Panc1 (cell line): ENCODE measurements at regions of chr1 and their contacts with region 1.

Region 1: GRCh38 chr1:36223993-36224536 is at the start of gene THRAP3:
- DNase-seq: peak; percentile 96
- ATAC-seq: peak; percentile 98
- H3K4me3 ChIP-seq: peak within 1 kb of the TSS; percentile 82 to 97
- H3K27ac ChIP-seq: peak within 1 kb of the TSS; percentile 96
- H3K4me1 ChIP-seq: peaks cover 11% of the 10 kb centered on the region
- H3K27me3 ChIP-seq: no peaks in the 10 kb centered on the region
- CTCF ChIP-seq: no peak
- total RNA-seq, gene THRAP3: 114 TPM

Region 2: DNA sequence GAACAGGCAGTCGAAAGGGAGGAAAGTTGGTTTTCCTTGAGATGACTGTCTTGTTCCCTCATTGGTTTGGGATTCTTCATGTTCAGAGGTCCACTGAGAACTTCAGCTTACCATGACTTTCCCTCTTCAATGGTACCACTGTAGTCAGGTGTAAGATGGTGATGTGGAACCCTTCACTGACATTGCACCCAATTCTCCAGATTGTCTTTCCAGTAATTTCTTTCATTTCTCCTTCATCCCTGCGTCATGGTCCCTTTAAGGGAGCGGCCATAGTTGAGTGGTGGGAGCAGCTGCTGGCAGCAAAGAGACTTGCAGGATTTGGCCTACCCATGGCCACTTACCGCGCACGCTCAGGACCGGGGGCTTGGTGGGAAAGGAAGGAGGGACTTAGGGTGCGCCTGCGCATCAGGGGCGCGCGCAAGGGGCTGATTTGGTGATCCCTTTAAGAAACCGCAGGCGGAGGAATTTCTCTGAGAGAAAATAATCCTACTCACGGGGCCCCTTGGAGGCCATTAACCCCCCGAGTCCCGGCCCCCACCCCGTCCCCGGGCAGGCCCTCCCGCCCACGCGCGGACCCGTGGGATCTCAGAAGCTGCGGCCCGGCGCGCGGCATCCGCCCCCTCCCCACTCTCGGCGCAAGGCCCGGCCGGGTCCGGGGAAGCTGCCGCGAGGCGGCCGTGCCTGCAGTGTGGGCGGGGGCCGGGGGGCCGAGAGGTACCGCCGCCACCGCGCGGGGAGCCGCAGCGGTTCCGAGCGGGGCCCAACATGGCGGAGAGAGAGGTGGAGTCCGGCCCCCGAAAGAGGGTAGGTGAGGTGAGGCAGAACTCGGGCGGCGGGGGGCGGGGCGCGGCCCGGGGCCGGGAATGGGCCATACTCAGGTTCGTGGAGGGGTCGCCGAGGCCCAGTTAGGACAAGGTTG is 955.5 kb before region 1 on chr1 and contains the start of gene ZMYM4:
- CTCF ChIA-PET with region 1: no interaction called
- POLR2A ChIA-PET with region 1: interaction called, 10 read pairs
- in situ Hi-C with region 1: no loop called
- intact Hi-C with region 1: no loop called
- DNase-seq: peak; percentile 73
- ATAC-seq: peak; percentile 96
- H3K4me3 ChIP-seq: peak within 1 kb of the TSS; percentile 85 to 93
- H3K27ac ChIP-seq: peak within 1 kb of the TSS; percentile 92
- H3K4me1 ChIP-seq: peaks cover 19% of the 10 kb centered on the region
- H3K27me3 ChIP-seq: no peaks in the 10 kb centered on the region
- CTCF ChIP-seq: no peak
- total RNA-seq, gene ZMYM4: 82.2 TPM

Region 3: DNA sequence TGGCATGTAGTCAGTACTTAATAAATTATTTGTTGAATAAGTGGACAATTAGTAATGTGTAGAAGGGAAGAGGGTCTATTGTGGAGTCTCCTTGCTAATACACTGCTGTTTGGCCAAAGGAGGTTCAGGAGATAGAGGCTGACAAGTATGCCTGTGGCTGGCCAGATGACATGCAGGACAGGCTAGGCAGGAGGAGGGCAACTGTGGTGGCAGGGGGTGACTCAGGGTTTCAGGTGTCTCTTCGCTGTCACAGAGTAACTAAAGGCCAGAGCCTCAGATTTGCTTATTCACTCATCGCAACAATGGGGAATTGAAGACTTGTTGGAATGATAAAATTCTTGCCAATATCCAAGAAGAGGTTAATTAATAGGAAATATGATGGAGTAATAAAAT is 33.3 kb after region 1 on chr1:
- CTCF ChIA-PET with region 1: no interaction called
- POLR2A ChIA-PET with region 1: interaction called, 12 read pairs
- in situ Hi-C with region 1: no loop called
- intact Hi-C with region 1: no loop called
- DNase-seq: no peak
- ATAC-seq: no peak
- H3K4me3 ChIP-seq: no peak overlapping the region
- H3K27ac ChIP-seq: no peak overlapping the region
- H3K4me1 ChIP-seq: peaks cover 31% of the 10 kb centered on the region
- H3K27me3 ChIP-seq: no peaks in the 10 kb centered on the region
- CTCF ChIP-seq: no peak

Region 4: GRCh38 chr1:36397378-36398230 is 173.5 kb after region 1 on chr1 and contains the start of gene LSM10:
- CTCF ChIA-PET with region 1: interaction called, 10 read pairs
- POLR2A ChIA-PET with region 1: no interaction called
- in situ Hi-C with region 1: no loop called
- intact Hi-C with region 1: no loop called
- DNase-seq: peak; percentile 87
- ATAC-seq: peak; percentile 98
- H3K4me3 ChIP-seq: peak within 1 kb of the TSS; percentile 80 to 93
- H3K27ac ChIP-seq: peak within 1 kb of the TSS; percentile 79
- H3K4me1 ChIP-seq: no peaks in the 10 kb centered on the region
- H3K27me3 ChIP-seq: no peaks in the 10 kb centered on the region
- CTCF ChIP-seq: no peak
- total RNA-seq, gene LSM10: 53.7 TPM

Region 5: DNA sequence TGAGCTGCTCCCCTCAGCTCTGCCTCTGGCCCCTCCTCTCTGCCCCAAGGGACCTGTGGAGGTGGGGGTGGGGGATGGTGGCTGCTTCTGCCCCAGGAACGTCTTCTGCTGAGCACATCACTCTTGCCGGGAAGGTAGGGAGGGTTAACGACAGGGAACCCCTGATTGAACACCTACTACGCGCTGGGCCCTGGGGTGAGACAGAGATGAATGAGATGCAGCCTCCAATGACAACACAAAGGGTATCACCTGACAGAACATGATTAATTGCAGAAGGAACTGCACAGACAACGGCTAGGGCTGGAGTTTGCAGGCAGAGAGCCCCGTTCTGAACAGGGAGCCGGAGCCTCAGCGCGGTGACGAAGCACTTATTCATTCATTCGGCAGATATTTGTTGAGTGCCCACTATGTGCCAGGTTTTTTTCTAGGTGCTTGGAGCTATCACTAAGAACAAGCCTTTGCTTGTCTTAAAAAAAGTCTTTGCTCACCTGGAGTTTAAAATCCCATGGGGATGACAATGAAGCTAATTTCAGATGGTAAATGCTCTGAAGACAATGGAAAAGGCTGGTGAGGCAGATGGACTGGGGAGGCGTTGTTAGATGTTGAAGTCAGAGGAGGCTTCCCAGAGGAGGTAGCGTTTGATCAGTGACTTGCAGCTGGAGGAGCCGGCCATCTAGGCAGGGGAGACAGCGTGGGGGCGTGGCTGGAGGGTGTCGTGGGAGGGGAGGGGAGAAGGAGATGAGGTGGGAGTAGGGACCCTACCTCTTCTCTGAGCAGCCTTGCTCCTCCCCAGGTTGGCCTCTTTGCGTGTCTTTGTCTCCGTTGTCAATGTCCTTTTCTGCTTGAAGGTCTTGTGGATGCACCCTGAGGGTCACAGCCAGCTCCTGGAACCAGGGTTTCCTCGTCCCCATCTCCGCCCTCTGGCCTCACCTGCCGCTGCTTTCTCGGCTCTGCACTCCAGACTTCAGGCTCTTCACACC is 361.8 kb after region 1 on chr1:
- CTCF ChIA-PET with region 1: no interaction called
- POLR2A ChIA-PET with region 1: no interaction called
- in situ Hi-C with region 1: no loop called
- intact Hi-C with region 1: no loop called
- DNase-seq: no peak
- ATAC-seq: no peak
- H3K4me3 ChIP-seq: no peak overlapping the region
- H3K27ac ChIP-seq: no peak overlapping the region
- H3K4me1 ChIP-seq: no peaks in the 10 kb centered on the region; the same call in none of the 2 replicates
- H3K27me3 ChIP-seq: no peaks in the 10 kb centered on the region; the same call in none of the 2 replicates
- CTCF ChIP-seq: no peak